ENCODE measurements at regions of chr1 and their contacts with region 1.

Region 1: DNA sequence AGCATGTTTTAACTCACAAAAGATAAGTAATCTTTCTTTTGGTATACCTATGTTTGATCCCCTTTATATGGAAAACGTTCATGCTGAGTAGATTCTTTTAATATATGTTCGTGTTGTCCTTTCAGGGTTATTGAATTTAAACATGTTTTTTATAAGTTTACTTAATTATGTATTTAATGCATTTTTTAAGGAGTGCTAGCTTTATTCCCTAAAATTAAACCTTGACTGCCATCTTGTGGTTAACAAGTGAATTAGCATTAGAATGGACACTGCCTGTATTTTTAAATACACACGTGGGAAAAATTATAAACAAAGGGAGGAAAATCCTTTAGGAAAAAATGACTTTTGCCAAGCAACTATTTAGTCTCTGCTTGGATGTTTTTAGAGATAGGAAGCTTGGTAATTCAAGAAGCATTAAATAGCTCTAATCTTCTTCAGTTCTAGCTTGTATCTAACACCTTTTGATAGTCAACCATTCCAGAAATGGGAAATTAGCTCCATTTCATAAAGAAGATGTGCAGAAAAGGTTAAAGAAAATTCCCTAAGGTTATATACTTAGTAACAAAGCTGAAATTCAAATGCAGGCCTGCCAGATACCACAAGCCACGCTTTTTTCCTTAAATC is 43.0 kb downstream of the UBE2U start:
- DNase-seq: peak in 1 of 35 experiments; percentile 55
- ATAC-seq: no peak
- H3K4me3 ChIP-seq: no peak overlapping the region
- H3K4me3 Mint-ChIP-seq: no peak overlapping the region
- H3K27ac ChIP-seq: no peak overlapping the region
- H3K27ac Mint-ChIP-seq: no peak overlapping the region
- H3K4me1 ChIP-seq: peaks cover 7 to 19% of the 10 kb centered on the region in 2 experiments
- H3K4me1 Mint-ChIP-seq: peaks cover 26 to 29% (median 27%) of the 10 kb centered on the region in 3 donors
- H3K27me3 ChIP-seq: peaks cover 0 to 13% of the 10 kb centered on the region in 2 experiments
- H3K27me3 Mint-ChIP-seq: peaks cover 7 to 19% of the 10 kb centered on the region in 2 donors

Region 2: GRCh38 chr1:63615768-63616420 is 630.5 kb before region 1 on chr1:
- CTCF ChIA-PET with region 1: interaction called, 7 to 13 read pairs
- POLR2A ChIA-PET with region 1: interaction called in 1 of 2 experiments, 3 read pairs
- DNase-seq: peak in 34 of 35 experiments; percentile 3 to 83 (median 28)
- ATAC-seq: peak; percentile 64 to 80 (median 66)
- H3K4me3 ChIP-seq: no peak overlapping the region
- H3K4me3 Mint-ChIP-seq: no peak overlapping the region
- H3K27ac ChIP-seq: no peak overlapping the region
- H3K27ac Mint-ChIP-seq: no peak overlapping the region
- H3K4me1 ChIP-seq: no peaks in the 10 kb centered on the region
- H3K4me1 Mint-ChIP-seq: peaks cover 2 to 7% (median 4%) of the 10 kb centered on the region in 3 donors
- H3K27me3 ChIP-seq: no peaks in the 10 kb centered on the region
- H3K27me3 Mint-ChIP-seq: no peaks in the 10 kb centered on the region

Region 3: DNA sequence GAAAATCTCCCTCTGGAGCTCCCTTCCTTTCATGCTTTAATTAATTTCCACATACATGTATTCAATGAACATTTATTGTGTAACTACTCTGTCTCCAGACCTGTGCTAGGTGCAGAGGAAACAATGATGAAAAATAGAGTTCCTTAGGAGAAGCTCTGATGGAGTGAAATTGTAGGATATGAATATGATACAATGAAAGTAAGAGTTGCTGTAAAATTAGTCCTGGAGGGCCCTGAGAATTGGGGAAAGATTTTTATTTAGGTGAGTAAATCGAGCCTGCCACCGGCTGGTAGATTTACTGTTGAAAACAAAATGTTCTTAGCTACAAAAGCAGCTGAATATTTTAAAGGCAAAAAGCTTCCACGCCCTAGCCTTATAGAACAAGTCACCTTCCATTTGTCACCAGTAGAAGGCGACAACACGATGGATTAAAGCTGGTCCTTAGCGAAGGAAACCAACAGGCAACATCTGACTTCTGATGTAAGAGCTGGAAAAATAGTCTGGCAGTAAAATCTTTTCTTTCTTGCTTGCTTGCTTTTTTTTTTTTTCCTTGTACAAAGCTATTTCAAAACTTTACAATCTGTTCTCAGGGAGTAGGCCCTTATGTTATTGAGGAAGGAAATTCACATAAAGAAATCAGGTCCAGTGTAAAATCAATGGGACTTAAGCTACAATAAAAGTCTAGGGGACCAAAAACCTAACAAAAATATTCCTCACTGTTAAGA is 554.5 kb before region 1 on chr1:
- CTCF ChIA-PET with region 1: interaction called, 3 to 14 read pairs
- POLR2A ChIA-PET with region 1: no interaction called
- DNase-seq: peak in 11 of 35 experiments; percentile 2 to 53 (median 5)
- ATAC-seq: peak in 2 of 4 experiments; percentile 53 to 61
- H3K4me3 ChIP-seq: no peak overlapping the region
- H3K4me3 Mint-ChIP-seq: no peak overlapping the region
- H3K27ac ChIP-seq: no peak overlapping the region
- H3K27ac Mint-ChIP-seq: no peak overlapping the region
- H3K4me1 ChIP-seq: no peaks in the 10 kb centered on the region
- H3K4me1 Mint-ChIP-seq: peaks cover 0 to 6% (median 1%) of the 10 kb centered on the region in 3 donors
- H3K27me3 ChIP-seq: peaks cover 0 to 5% of the 10 kb centered on the region in 2 experiments
- H3K27me3 Mint-ChIP-seq: peaks cover 0 to 2% of the 10 kb centered on the region in 2 donors

Region 4: DNA sequence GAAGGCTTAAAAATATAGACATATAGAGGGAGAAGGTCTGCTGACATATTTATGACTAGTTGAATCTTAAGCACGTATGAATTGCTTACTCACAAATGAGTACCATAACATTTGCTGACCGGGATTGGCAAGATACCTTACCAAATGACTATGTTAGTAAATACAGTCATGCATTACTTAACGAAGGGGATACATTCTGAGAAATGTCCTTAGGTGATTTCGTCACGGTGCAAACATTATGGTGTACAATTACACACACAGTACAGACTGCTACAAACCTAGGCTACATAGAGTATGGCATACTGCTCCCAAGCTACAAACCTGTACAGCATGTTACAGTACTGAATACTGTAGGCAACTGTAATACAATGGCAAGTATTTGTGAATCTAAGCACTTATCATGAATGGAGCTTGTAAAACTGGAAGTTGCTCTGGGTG is 62.4 kb before region 1 on chr1:
- CTCF ChIA-PET with region 1: no interaction called
- POLR2A ChIA-PET with region 1: no interaction called
- DNase-seq: no peak
- ATAC-seq: no peak
- H3K4me3 ChIP-seq: no peak overlapping the region
- H3K4me3 Mint-ChIP-seq: no peak overlapping the region
- H3K27ac ChIP-seq: no peak overlapping the region
- H3K27ac Mint-ChIP-seq: peak overlapping the region in 1 of 2 donors; percentile 56
- H3K4me1 ChIP-seq: peaks cover 0 to 3% of the 10 kb centered on the region in 2 experiments
- H3K4me1 Mint-ChIP-seq: peaks cover 6 to 8% (median 8%) of the 10 kb centered on the region in 3 donors
- H3K27me3 ChIP-seq: peaks cover 0 to 5% of the 10 kb centered on the region in 2 experiments
- H3K27me3 Mint-ChIP-seq: peaks cover 1 to 5% of the 10 kb centered on the region in 2 donors